ENCODE measurements at regions of chr19 and their contacts with region 1.

Region 1: DNA sequence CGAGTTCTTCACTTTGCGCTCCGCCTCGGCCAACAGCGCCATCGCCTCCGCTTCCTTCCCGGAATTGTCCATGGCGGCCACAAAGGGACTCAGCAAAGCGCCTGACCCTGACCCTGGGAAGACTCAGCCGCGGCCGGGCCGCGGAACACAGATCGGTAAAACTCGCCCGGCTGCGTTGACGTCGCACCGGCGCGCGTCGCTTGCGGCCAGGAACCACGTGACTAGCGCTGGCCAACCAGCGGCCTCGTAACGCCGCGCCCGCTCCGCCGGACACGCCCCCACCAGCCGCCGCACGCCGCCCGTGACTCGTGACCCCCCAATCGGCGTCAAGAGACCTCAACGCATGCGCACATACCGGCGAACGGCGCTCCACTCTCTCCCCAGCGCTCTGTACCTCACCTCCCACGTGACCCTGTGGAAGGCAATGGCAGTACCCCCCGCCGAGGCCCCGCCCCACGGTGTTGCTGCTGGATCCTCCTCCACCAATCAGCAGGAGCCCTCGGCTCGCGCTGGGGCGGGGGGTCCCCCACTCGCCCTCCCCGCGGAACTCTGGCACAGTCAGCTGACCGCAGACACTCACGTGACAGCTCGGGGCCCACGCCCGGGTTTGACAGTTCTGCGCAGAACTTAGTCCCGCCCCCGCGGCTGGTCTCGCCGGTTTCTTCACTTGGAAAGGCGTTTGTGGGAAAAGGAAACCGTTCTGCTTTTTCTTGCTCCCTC is at the start of gene NAPA:
- DNase-seq: peak; percentile 100
- ATAC-seq: peak; percentile 98
- total RNA-seq, gene NAPA: 113 TPM

Region 2: GRCh38 chr19:47324502-47324901 is 190.5 kb before region 1 on chr19:
- intact Hi-C with region 1: no loop called
- DNase-seq: peak; percentile 60
- ATAC-seq: peak; percentile 87

Region 3: DNA sequence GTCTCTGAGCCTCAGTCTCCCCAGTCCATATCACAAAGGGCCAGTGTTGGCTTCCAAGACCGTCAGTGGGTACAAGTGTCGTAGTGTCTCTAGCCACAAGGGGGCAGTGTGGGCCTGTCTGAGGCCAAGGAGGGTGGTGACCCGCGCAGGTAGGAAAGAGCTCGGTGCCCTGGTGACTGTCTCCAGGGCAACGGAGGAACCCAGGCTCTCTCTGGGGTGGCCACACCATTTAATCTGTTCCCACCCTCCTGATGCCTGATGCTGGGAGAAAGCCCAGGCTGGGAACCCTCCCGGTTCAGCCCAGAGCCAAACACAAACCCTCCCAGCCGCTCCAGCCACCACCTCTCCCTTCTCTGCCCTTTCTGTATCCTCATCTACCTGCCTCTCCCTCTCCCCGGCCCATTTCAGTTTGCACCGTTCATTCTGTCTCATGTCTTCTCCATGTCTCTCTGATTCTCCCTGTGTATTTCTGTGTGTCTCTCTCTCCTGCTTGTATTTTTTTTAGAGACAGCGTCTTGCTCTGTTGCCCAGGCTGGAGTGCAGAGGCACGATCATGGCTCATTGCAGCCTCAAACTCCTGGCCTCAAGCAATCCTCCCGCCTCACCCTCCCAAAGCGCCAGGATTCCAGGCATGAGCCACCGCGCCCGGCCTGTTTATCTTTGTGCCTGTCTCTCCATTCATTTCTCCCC is 78.2 kb before region 1 on chr19:
- intact Hi-C with region 1: loop called (anchors 5 kb)
- DNase-seq: peak; percentile 85
- ATAC-seq: peak; percentile 96

Region 4: DNA sequence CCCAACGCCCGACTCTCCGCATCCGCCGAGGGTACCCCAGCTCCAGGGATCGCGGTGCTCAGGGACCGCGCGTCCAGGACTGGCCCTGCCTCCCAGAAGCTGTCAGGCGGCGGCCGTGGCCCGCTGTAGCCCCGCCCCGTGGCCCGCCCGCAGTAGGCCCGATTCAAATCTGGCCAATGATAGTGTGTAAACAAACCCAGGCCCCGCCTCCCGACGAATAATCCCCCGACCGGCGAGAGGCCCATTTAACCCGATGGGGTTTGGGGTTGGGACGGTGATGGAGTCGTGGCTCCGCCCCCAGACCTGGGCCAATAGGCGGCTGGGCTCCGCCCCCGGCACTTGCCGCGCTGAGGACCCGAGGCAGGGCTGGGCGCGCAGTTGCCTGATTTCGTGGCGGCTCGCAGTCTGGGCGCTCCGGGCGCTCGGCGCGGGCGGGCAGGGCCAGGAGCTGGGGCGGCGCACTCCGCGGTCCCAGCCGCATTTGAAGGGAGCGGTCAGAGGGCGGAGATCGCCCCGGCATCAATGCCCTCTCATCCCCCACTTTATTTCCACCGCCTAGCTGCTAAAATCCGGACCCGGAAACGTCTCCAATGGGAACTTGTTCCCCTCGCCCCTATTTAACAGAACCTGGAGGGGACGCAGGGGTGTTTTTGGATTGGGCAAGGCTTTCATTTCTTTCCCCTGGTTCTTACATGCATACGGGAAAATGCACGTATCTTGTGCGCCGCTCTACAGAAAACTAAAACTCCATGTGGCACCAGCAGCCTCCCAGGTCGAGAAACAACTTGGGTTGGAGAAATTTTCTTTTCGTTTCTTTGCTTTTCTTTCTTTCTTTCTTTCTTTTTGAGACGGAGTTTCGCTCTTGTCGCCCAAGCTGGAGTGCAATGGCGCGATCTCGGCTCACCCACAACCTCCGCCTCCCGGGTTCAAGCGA is 85.5 kb after region 1 on chr19:
- intact Hi-C with region 1: loop called (anchors 2 kb)
- DNase-seq: peak; percentile 100
- ATAC-seq: peak; percentile 98